Spleen (tissue), 13 donors: ENCODE measurements at regions of chr15 and their contacts with region 1.

Region 1: GRCh38 chr15:66946578-66947164 is 118.7 kb upstream of the SMAD3 start:
- DNase-seq: peak; percentile 91
- H3K4me3 ChIP-seq: no peak overlapping the region
- H3K27ac ChIP-seq: no peak overlapping the region
- H3K4me1 ChIP-seq: peaks cover 0 to 18% (median 2%) of the 10 kb centered on the region in 6 donors
- H3K27me3 ChIP-seq: no peaks in the 10 kb centered on the region
- CTCF ChIP-seq: peak; percentile 90 to 97 (median 95)
- POLR2A ChIP-seq: no peak

Region 2: DNA sequence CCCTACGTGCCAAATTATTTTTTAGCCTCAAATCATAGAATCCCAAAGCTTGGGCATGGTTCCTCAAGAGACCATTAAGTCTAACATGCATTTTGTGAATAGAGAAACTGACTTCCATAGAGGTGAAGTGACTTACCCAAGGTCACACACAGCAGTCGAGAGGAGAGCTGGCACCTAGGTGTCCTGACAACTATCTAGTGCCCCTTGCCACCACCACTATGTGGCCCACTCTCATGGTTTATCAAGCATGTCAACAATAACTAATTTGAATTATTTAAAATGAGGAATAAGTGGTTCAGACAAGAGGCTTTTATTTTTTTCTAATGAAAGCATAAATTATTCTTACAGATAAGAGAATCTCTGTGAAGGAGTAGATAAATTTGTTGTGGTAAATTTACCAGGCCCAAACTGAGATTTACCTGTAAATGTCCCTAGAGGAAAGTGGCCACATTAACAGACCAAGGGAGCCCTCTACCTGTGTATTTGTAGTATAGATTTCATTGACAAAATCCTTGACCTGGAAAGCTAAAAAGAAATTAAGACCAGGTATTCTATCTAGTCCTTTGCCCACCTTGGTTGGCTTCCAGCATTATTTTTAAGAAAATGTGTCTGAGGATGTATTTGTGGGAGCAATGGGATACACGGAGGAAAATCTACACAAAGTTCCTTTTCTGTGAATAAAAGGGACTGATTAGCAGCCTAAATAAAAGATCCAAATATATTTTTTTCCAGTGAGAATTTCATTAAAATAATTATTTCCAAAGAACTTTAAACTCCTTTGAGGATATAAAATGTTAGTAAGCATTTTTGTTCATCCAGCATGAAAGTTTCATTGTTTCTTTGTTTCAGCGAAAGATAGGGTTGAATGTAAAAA is 357.1 kb after region 1 on chr15:
- intact Hi-C with region 1: loop called (anchors 2 kb)
- DNase-seq: no peak
- H3K4me3 ChIP-seq: no peak overlapping the region
- H3K27ac ChIP-seq: no peak overlapping the region
- H3K4me1 ChIP-seq: no peaks in the 10 kb centered on the region
- H3K27me3 ChIP-seq: no peaks in the 10 kb centered on the region
- CTCF ChIP-seq: peak in 9 of 11 experiments; percentile 7 to 59 (median 48)
- POLR2A ChIP-seq: no peak

Region 3: DNA sequence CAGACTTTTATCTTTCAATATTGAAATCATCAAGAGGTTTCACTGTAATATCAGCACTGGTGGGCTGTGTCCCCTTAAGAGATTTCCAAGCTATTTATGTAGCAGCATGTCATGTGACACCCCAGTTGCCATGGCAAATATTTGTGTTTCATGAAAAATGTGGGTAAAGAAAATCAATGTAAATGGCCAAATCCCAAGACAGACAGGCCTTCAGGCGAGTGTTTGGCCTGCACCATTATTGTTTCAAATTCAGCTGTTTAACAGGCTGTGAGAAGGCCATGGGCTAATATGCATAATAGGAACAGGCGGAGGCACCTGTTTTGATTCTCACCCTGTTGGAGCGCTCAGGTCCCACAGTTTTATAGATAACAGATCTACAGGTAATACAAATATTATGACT is 412.1 kb after region 1 on chr15:
- intact Hi-C with region 1: no loop called
- DNase-seq: no peak
- H3K4me3 ChIP-seq: no peak overlapping the region
- H3K27ac ChIP-seq: no peak overlapping the region
- H3K4me1 ChIP-seq: no peaks in the 10 kb centered on the region
- H3K27me3 ChIP-seq: no peaks in the 10 kb centered on the region
- CTCF ChIP-seq: no peak
- POLR2A ChIP-seq: no peak

Region 4: DNA sequence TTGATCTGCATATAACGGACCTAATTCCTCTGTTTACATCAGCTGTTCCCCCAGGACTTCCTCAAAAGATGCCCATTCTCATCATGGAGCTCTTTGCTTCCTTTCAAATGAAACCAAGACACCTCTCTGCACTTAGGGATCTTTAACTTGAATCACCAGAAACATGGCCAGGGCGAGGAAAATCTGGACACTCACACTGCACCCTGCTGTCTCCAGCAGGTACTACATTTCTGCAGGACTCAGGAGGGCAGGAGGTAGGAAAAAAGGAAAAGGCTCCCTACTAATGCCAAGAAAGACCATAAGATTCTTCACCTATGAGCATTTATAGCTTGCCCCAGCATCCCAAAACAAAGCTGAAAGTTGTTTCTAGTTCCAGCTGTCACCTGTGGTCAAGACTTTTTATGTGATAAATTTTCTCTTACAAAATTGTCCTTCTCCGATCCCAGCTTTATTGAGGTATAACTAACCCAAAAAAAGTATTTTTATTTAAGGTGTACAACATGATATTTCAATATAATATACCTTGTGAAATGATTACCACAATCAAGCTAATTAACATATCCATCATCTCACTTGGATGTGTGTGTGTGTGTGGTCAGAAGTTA is 486.9 kb after region 1 on chr15:
- intact Hi-C with region 1: loop called (anchors 5 kb)
- DNase-seq: no peak
- H3K4me3 ChIP-seq: no peak overlapping the region
- H3K27ac ChIP-seq: no peak overlapping the region
- H3K4me1 ChIP-seq: no peaks in the 10 kb centered on the region
- H3K27me3 ChIP-seq: no peaks in the 10 kb centered on the region
- CTCF ChIP-seq: peak; percentile 22 to 78 (median 67)
- POLR2A ChIP-seq: no peak